ENCODE measurements at regions of chr3 and their contacts with region 1.

Region 1: DNA sequence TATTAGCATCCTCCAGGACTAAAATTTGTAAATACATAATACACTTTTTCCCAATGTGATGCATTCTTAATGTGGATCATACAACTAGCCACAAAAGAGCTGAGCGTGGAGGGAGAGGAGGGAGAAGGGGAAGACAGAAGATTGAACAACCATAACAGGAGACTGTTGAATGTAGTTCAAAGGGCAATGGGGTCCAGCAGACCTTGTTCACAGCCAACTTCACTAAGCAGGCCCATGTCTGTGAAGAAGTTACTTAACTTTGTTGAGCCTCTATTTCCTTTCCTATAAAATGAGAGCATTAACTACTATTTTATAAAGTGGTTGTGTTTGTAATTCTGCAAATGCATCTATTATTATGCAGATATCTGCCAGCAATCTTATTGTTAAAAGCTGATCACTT is 13.3 kb downstream of the NCEH1 start:
- DNase-seq: no peak
- ATAC-seq: no peak
- H3K4me3 ChIP-seq: no peak overlapping the region
- H3K27ac ChIP-seq: no peak overlapping the region
- H3K4me1 ChIP-seq: peaks cover 23% of the 10 kb centered on the region
- H3K27me3 ChIP-seq: no peaks in the 10 kb centered on the region
- CTCF ChIP-seq: no peak

Region 2: DNA sequence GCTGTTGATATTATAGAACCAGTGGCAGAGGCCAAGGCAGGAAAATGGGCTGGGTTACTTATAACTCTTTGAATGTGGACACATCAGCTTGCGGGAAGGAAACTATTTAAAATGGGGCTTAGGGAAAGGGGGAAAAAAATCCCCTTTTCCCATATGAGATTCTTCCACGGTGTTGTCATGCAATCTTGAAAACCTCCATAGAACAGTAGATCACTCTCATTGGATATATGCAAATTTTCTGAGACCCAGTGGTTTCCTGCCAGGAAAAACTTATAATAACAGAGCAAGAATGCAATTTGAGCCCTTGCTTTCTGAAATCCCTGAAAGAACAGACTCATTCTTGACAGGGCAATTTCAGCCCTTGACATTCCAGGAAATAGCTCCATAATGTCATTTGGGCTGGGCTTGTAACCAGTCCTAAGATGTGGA is 823.3 kb before region 1 on chr3:
- CTCF ChIA-PET with region 1: no interaction called
- POLR2A ChIA-PET with region 1: no interaction called
- in situ Hi-C with region 1: no loop called
- intact Hi-C with region 1: no loop called
- DNase-seq: no peak
- ATAC-seq: no peak
- H3K4me3 ChIP-seq: no peak overlapping the region
- H3K27ac ChIP-seq: no peak overlapping the region
- H3K4me1 ChIP-seq: peaks cover 2% of the 10 kb centered on the region; the same call in 1 of the 2 replicates
- H3K27me3 ChIP-seq: peaks cover 4% of the 10 kb centered on the region; the same call in 1 of the 2 replicates
- CTCF ChIP-seq: no peak

Region 3: GRCh38 chr3:172685346-172686214 is 12.0 kb before region 1 on chr3:
- CTCF ChIA-PET with region 1: interaction called, 12 read pairs
- POLR2A ChIA-PET with region 1: no interaction called
- in situ Hi-C with region 1: no loop called
- intact Hi-C with region 1: no loop called
- DNase-seq: no peak
- ATAC-seq: no peak
- H3K4me3 ChIP-seq: no peak overlapping the region
- H3K27ac ChIP-seq: peak overlapping the region; percentile 29; the same call in 1 of the 2 replicates
- H3K4me1 ChIP-seq: peaks cover 16% of the 10 kb centered on the region
- H3K27me3 ChIP-seq: no peaks in the 10 kb centered on the region
- CTCF ChIP-seq: no peak